ENCODE measurements at regions of chr16 and their contacts with region 1.

Region 1: GRCh38 chr16:56950881-56951771 is 10.6 kb upstream of the CETP start:
- DNase-seq: peak; percentile 87
- H3K4me3 Mint-ChIP-seq: no peak overlapping the region
- H3K27ac Mint-ChIP-seq: peak overlapping the region; percentile 66
- H3K4me1 Mint-ChIP-seq: peaks cover 17% of the 10 kb centered on the region
- H3K27me3 Mint-ChIP-seq: no peaks in the 10 kb centered on the region

Region 2: DNA sequence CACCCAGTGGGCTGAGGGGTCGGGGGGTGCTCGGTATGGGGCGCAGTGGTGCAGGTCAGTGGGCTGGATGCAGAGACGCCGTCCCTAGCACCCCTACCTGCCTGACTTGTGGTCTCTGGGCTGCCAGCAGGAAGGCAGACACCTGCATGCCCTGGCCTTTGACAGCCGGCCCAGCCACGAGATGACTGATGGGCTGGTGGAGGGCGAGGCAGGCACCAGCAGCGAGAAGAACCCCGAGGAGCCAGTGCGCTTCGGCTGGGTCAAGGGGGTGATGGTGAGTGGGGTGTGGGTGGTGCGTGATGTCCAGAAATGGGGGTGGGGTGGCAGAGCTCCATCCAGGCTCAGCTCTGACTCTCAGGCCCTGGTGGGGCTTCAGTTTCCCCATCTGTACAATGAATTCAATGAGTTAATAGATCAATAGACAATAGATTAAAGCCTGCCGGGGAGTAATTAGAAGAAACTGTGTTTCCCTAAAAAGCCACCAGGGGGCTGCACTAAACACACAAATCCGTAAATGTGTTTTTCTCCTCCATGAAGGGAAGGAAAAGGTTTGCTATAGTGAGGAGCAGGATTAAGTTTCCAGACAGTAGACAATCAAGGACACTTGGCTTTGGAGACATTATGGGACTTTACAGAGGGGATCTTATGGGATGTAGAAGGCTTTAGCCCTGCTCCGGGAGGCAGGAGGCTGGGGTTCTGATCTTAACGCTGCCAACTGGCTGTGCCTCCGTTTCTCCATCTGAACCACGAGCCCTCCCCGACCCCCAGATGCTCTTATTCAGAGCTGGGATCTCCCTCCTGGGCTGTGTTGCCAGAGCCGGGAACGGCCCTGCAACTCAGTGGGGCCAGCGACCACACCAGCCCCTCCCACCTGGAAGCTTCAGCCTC is 83.9 kb before region 1 on chr16:
- intact Hi-C with region 1: loop called (anchors 1 kb)
- DNase-seq: peak; percentile 84
- H3K4me3 Mint-ChIP-seq: no peak overlapping the region
- H3K27ac Mint-ChIP-seq: no peak overlapping the region
- H3K4me1 Mint-ChIP-seq: peaks cover 19% of the 10 kb centered on the region
- H3K27me3 Mint-ChIP-seq: no peaks in the 10 kb centered on the region

Region 3: DNA sequence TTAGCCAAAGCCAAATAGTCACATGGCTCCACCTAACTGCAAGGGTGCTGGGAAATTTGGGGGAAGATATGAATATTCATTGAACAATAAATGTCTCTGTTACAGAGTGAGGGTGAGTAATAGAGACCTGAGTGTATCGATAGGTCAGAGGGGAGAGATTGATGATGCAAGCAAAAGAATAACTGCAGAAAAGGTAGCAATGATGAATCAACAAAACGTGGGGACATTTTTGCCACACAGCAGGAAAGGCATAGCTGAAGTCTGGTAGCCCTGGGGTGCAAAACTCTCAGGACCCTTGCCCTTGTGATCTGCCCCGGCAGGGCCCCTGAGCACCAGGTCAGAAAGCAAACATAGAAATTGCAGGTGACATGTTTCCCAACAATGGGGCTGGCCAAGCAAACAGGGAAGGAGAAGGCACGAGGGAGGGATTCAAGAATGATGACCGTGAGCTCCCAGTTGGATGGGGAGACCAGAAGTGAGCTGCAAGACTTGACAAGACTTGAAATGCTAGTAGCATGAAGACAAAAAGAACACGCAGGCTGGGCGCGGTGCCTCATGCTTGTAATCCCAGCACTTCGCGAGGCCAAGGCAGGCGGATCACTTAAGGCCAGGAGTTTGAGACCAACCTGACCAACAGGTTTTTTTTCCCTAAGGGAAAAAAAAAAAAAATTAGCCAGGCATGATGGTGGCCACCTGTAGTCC is 31.9 kb before region 1 on chr16:
- intact Hi-C with region 1: no loop called
- DNase-seq: no peak
- H3K4me3 Mint-ChIP-seq: no peak overlapping the region
- H3K27ac Mint-ChIP-seq: no peak overlapping the region
- H3K4me1 Mint-ChIP-seq: peaks cover 32% of the 10 kb centered on the region
- H3K27me3 Mint-ChIP-seq: peaks cover 2% of the 10 kb centered on the region

Measured in activated CD4-positive, alpha-beta T cell treated with anti-CD3 and anti-CD28 coated beads, Interleukin-2, amount 10 ng/mL, durations not matched to agents 24 days and 14 days (primary cell).